Dendritic cell treated with granulocyte-macrophage colony-stimulating factor and Interleukin-4, amounts not matched to agents 40 ng/mL and 50 ng/mL, for 4 days (primary cell): ENCODE measurements at regions of chr14 and their contacts with region 1.

Region 1: GRCh38 chr14:34629657-34630529 is at the start of gene SNX6:
- H3K4me3 Mint-ChIP-seq: peak within 1 kb of the TSS; percentile 81
- H3K27ac Mint-ChIP-seq: peak within 1 kb of the TSS; percentile 84
- H3K4me1 Mint-ChIP-seq: peaks cover 44% of the 10 kb centered on the region
- H3K27me3 Mint-ChIP-seq: no peaks in the 10 kb centered on the region

Region 2: DNA sequence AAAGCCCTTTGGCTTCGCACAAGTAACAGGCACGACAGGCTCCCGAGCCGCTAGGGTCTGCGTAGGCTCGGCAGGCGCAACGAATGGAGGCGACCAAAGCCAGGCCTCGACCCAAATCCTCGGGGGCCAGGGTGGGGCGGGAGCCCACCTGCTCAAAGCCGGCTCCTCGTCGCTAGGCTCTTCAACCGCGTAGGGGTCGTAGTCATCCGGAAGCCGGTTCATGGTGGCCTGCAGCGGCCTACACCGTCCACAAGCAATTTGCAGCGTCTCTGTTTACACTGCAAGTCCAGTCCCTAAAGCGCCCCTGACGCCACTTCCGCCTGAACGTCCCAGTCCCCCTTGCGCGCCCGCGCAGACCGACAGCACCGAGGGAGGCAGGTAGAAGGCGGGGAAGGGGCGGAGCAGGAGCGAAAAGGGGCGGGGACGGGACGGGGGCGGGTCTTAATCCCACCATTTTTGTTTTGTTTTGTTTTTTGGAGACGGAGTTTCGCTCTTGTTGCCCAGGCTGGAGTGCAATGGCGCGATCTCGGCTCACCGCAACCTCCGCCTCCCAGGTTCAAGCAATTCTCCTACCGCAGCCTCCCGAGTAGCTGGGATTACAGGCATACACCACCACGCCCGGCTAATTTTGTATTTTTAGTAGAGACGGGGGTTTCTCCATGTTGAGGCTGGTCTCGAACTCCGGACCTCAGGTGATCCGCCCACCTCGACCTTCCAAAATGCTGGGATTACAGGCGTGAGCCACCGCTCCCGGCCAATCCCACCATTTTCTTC is 90.3 kb before region 1 on chr14 and contains the start of gene EAPP:
- intact Hi-C with region 1: no loop called
- H3K4me3 Mint-ChIP-seq: peak within 1 kb of the TSS; percentile 97
- H3K27ac Mint-ChIP-seq: peak within 1 kb of the TSS; percentile 99
- H3K4me1 Mint-ChIP-seq: peaks cover 9% of the 10 kb centered on the region
- H3K27me3 Mint-ChIP-seq: no peaks in the 10 kb centered on the region

Region 3: GRCh38 chr14:34665785-34666435 is 36.0 kb after region 1 on chr14:
- intact Hi-C with region 1: loop called (anchors 5 kb)
- H3K4me3 Mint-ChIP-seq: no peak overlapping the region
- H3K27ac Mint-ChIP-seq: peak overlapping the region; percentile 88
- H3K4me1 Mint-ChIP-seq: peaks cover 22% of the 10 kb centered on the region
- H3K27me3 Mint-ChIP-seq: no peaks in the 10 kb centered on the region

Region 4: GRCh38 chr14:34714320-34715126 is 84.6 kb after region 1 on chr14 and contains the start of gene CFL2:
- intact Hi-C with region 1: loop called (anchors 5 kb)
- H3K4me3 Mint-ChIP-seq: peak within 1 kb of the TSS; percentile 80
- H3K27ac Mint-ChIP-seq: peak within 1 kb of the TSS; percentile 88
- H3K4me1 Mint-ChIP-seq: peaks cover 7% of the 10 kb centered on the region
- H3K27me3 Mint-ChIP-seq: peaks cover 6% of the 10 kb centered on the region

Region 5: DNA sequence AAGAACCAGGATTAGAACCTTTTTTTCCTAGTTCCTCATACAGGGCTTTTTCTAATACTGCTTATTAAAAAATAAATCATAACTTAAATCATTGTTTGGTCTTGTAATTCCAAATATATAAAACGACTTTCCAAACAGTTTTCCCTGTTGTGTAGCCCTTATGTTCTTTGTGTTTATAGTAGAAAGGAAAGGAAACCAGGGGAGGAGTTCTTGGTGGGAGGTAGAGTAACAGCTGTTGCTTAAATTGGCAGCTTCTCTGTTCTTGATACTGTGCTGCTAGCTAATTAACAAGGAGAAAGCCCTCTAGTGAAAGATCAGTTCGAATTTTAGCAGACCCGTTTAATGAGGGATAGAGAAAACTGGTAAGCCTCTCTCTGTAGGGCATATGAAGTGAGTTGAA is 367.9 kb after region 1 on chr14:
- intact Hi-C with region 1: no loop called
- H3K4me3 Mint-ChIP-seq: no peak overlapping the region
- H3K27ac Mint-ChIP-seq: no peak overlapping the region
- H3K4me1 Mint-ChIP-seq: peaks cover 12% of the 10 kb centered on the region
- H3K27me3 Mint-ChIP-seq: no peaks in the 10 kb centered on the region